HEK293 (cell line): ENCODE measurements at regions of chr6 and their contacts with region 1.

Region 1: DNA sequence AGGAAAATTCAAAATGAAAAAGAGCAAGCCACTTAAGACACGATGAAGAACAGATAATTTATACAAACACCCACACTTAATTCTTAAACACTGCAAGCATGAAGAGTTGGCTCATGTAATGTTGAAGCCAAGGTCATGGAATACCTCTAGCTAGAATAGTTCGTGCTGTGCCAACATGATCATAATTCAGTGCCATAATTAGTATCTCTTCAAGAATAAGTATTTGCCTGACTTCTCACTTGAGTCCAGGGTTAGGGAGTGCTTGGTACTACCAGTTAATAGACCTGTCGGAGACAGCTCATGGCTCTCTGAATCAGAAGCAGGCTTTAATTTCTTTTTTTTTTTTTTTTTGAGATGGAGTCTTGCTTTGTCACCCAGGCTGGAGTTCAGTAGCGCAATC is 206.3 kb downstream of the UNC5CL start:
- H3K4me3 ChIP-seq: no peak overlapping the region
- H3K27ac ChIP-seq: no peak overlapping the region
- H3K4me1 ChIP-seq: no peaks in the 10 kb centered on the region
- CTCF ChIP-seq: no peak

Region 2: DNA sequence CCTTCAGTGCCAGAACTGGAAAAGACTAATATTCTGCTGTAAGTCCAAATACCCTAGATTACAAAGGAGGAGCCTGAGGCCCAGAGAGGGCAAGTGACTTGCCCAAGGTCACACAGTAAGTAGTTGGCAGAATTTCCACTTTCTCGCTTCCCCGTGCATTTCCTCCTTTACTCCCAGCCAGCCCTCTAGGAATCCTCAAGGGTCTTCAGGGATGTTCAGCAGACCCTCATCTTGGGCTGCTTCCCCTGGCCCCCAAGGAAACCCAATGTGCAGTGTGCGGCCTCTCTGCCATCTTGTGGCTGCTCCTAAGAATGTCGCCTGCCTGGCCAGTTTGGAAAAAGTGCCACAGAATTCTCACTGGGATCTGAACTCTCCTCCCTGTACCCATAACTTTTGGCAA is 27.8 kb before region 1 on chr6:
- CTCF ChIA-PET with region 1: no interaction called
- POLR2A ChIA-PET with region 1: no interaction called
- H3K4me3 ChIP-seq: no peak overlapping the region
- H3K27ac ChIP-seq: no peak overlapping the region
- H3K4me1 ChIP-seq: no peaks in the 10 kb centered on the region
- CTCF ChIP-seq: no peak

Region 3: GRCh38 chr6:40845553-40845952 is 12.9 kb after region 1 on chr6:
- CTCF ChIA-PET with region 1: interaction called, 12 read pairs
- POLR2A ChIA-PET with region 1: no interaction called
- H3K4me3 ChIP-seq: no peak overlapping the region
- H3K27ac ChIP-seq: no peak overlapping the region
- H3K4me1 ChIP-seq: peaks cover 3% of the 10 kb centered on the region; the same call in 1 of the 2 replicates
- CTCF ChIP-seq: no peak

Region 4: GRCh38 chr6:40907198-40907704 is 74.6 kb after region 1 on chr6:
- CTCF ChIA-PET with region 1: no interaction called
- POLR2A ChIA-PET with region 1: no interaction called
- H3K4me3 ChIP-seq: no peak overlapping the region
- H3K27ac ChIP-seq: no peak overlapping the region
- H3K4me1 ChIP-seq: peaks cover 5% of the 10 kb centered on the region; the same call in 1 of the 2 replicates
- CTCF ChIP-seq: no peak